ENCODE measurements at regions of chr15 and their contacts with region 1.

Region 1: GRCh38 chr15:59028387-59028955 is 41.0 kb downstream of the RNF111 start:
- DNase-seq: no peak
- H3K4me3 ChIP-seq: no peak overlapping the region
- H3K27ac ChIP-seq: no peak overlapping the region
- H3K4me1 ChIP-seq: peaks cover 12% of the 10 kb centered on the region
- H3K27me3 ChIP-seq: no peaks in the 10 kb centered on the region
- CTCF ChIP-seq: no peak
- POLR2A ChIP-seq: no peak

Region 2: DNA sequence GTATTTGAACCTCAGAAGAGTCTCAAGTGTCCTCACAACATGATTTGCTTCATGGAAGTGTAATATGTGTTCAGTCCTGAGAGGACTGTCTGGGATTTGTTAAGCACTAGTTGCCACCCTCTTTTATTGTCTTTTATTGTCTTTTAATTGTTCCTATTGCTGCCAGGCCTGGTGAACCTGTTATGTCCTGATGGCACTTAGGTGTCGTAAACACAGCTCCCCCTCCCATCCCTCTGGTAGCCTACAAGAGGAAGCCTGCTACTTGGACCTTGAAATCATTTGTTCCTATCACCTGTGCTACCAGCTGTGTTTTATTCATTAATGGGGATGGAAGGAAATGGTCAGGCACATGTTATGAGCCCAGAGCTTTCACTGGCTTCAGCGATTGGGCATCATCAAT is 95.8 kb after region 1 on chr15:
- intact Hi-C with region 1: loop called (anchors 5 kb)
- DNase-seq: no peak
- H3K4me3 ChIP-seq: no peak overlapping the region
- H3K27ac ChIP-seq: no peak overlapping the region
- H3K4me1 ChIP-seq: no peaks in the 10 kb centered on the region
- H3K27me3 ChIP-seq: no peaks in the 10 kb centered on the region
- CTCF ChIP-seq: no peak
- POLR2A ChIP-seq: no peak

Region 3: DNA sequence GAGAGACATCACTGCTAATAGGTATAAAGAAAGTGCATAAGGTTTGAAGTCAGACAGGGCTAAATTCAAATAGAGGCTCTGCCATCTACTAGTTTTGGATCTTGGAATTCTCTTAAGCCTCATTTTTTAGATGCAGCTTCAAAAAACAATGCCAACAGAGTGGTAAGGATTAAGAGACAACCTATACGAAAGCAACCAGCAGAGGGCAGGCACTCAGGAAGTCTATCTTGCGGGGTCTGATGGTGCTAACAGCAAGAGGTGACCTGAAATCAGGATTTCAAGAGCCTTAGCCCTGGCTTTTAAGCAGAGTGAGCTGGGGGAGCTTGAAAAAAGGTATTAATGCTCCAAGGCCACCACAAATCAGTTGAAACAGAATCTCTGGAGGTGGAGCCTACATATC is 218.9 kb after region 1 on chr15:
- intact Hi-C with region 1: no loop called
- DNase-seq: no peak
- H3K4me3 ChIP-seq: no peak overlapping the region
- H3K27ac ChIP-seq: no peak overlapping the region
- H3K4me1 ChIP-seq: no peaks in the 10 kb centered on the region
- H3K27me3 ChIP-seq: no peaks in the 10 kb centered on the region
- CTCF ChIP-seq: peak in 1 of 3 experiments; percentile 46
- POLR2A ChIP-seq: no peak

Measured in vagina (tissue), 2 donors.